Left ventricle myocardium inferior (tissue), 1 donor: ENCODE measurements at regions of chr18 and their contacts with region 1.

Region 1: GRCh38 chr18:23231340-23232021 is 96.2 kb downstream of the CABLES1 start:
- DNase-seq: peak; percentile 51
- H3K4me3 ChIP-seq: no peak overlapping the region
- H3K27ac ChIP-seq: peak overlapping the region; percentile 80
- H3K4me1 ChIP-seq: peaks cover 58% of the 10 kb centered on the region
- H3K27me3 ChIP-seq: no peaks in the 10 kb centered on the region
- CTCF ChIP-seq: no peak

Region 2: GRCh38 chr18:22865354-22866116 is 365.9 kb before region 1 on chr18:
- intact Hi-C with region 1: no loop called
- DNase-seq: no peak
- H3K4me3 ChIP-seq: no peak overlapping the region
- H3K27ac ChIP-seq: no peak overlapping the region
- H3K4me1 ChIP-seq: no peaks in the 10 kb centered on the region
- H3K27me3 ChIP-seq: peaks cover 32% of the 10 kb centered on the region
- CTCF ChIP-seq: no peak

Region 3: GRCh38 chr18:23131693-23132319 is 99.7 kb before region 1 on chr18:
- intact Hi-C with region 1: loop called (anchors 10 kb)
- DNase-seq: no peak
- H3K4me3 ChIP-seq: no peak overlapping the region
- H3K27ac ChIP-seq: no peak overlapping the region
- H3K4me1 ChIP-seq: peaks cover 21% of the 10 kb centered on the region
- H3K27me3 ChIP-seq: peaks cover 58% of the 10 kb centered on the region
- CTCF ChIP-seq: peak; percentile 87

Region 4: GRCh38 chr18:23178661-23179081 is 52.8 kb before region 1 on chr18:
- intact Hi-C with region 1: loop called (anchors 10 kb)
- DNase-seq: no peak
- H3K4me3 ChIP-seq: no peak overlapping the region
- H3K27ac ChIP-seq: no peak overlapping the region
- H3K4me1 ChIP-seq: peaks cover 9% of the 10 kb centered on the region
- H3K27me3 ChIP-seq: peaks cover 26% of the 10 kb centered on the region
- CTCF ChIP-seq: no peak

Region 5: GRCh38 chr18:23283916-23284430 is 52.5 kb after region 1 on chr18:
- intact Hi-C with region 1: no loop called
- DNase-seq: no peak
- H3K4me3 ChIP-seq: no peak overlapping the region
- H3K27ac ChIP-seq: no peak overlapping the region
- H3K4me1 ChIP-seq: no peaks in the 10 kb centered on the region
- H3K27me3 ChIP-seq: no peaks in the 10 kb centered on the region
- CTCF ChIP-seq: no peak